Cardiac septum (tissue), 1 donor: ENCODE measurements at regions of chr2 and their contacts with region 1.

Region 1: DNA sequence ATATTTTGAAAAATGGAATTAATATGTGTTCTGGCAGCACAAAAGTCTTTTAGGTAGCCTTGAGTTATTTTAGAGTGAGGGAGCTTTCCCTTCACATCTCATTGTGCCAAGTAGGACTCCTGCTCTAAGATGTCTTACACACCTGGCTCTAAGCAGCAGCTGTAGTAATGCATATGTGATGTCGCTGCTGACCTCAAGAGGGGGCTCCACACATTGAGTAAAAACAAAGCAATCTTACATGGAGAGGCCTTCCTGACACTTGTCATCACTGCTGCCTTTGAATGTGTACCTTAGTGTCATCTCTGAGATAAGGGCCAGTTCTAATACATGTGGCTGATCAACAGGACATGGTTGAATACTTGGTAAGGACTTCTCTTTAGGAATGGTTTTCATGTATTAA is 75.8 kb downstream of the ACTR3 start:
- DNase-seq: no peak

Region 2: DNA sequence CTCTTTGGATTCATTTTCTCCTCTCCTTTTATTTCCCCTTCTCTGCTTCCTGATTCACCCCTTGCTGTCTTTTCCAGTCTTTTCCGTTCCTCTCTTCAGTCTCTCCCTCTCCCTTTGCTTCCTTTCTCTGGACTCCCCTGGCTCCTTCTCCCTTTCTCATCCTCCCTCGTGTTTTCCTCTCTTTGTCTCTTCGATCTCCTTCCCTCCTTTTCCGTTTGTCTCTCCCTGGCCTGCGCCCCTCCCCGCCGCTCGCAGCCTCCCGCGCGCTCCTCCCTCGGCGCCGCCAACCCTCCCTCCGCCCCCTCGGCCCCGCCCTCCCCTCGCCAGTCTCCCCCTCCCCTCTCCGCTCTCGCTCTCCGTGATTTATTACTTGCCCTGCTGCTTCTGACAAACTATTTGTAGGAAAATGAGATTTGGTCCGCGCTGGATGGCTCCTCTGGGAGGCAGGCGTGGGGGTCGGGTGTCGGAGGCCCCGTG is 640.9 kb before region 1 on chr2:
- intact Hi-C with region 1: no loop called
- DNase-seq: no peak

Region 3: DNA sequence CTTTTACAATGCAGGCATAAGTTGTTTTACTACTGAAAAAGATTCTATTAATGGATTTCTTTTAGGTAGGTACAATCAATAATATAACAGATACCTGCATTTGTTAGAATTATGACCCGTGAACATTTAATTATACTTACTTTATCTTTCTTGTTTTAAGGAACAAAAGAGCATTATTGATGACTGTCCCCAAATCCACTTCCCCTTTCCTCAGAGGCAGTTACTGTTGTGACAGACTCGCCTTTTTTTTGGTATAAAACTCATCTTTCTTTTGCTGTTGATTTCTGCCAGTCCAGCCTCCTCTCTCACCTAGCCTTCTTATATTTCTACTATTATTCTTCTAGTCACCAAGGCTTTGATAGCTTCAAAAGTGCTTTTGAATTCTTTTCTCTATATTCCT is 63.7 kb before region 1 on chr2:
- intact Hi-C with region 1: loop called (anchors 10 kb)
- DNase-seq: no peak